Left ventricle myocardium inferior (tissue), 1 donor: ENCODE measurements at regions of chr17 and their contacts with region 1.

Region 1: GRCh38 chr17:69523244-69523861 is 108.9 kb downstream of the MAP2K6 start:
- DNase-seq: no peak
- H3K4me3 ChIP-seq: no peak overlapping the region
- H3K27ac ChIP-seq: peak overlapping the region; percentile 11
- H3K4me1 ChIP-seq: peaks cover 5% of the 10 kb centered on the region
- H3K27me3 ChIP-seq: no peaks in the 10 kb centered on the region
- CTCF ChIP-seq: peak; percentile 75

Region 2: GRCh38 chr17:69335058-69335457 is 188.3 kb before region 1 on chr17:
- intact Hi-C with region 1: loop called (anchors 5 kb)
- DNase-seq: no peak
- H3K4me3 ChIP-seq: no peak overlapping the region
- H3K27ac ChIP-seq: no peak overlapping the region
- H3K4me1 ChIP-seq: no peaks in the 10 kb centered on the region
- H3K27me3 ChIP-seq: no peaks in the 10 kb centered on the region
- CTCF ChIP-seq: peak; percentile 63

Region 3: GRCh38 chr17:69375229-69375628 is 148.1 kb before region 1 on chr17:
- intact Hi-C with region 1: no loop called
- DNase-seq: no peak
- H3K4me3 ChIP-seq: no peak overlapping the region
- H3K27ac ChIP-seq: no peak overlapping the region
- H3K4me1 ChIP-seq: no peaks in the 10 kb centered on the region
- H3K27me3 ChIP-seq: no peaks in the 10 kb centered on the region
- CTCF ChIP-seq: no peak